Caco-2 (cell line): ENCODE measurements at regions of chr12 and their contacts with region 1.

Region 1: GRCh38 chr12:31406345-31406744 is 80.4 kb upstream of the SINHCAF start:
- DNase-seq: no peak
- H3K4me3 ChIP-seq: no peak overlapping the region
- H3K4me3 Mint-ChIP-seq: no peak overlapping the region
- H3K27ac Mint-ChIP-seq: peak overlapping the region; percentile 3
- H3K4me1 ChIP-seq: no peaks in the 10 kb centered on the region; the same call in 1 of the 2 replicates
- H3K4me1 Mint-ChIP-seq: no peaks in the 10 kb centered on the region
- H3K27me3 ChIP-seq: peaks cover 1% of the 10 kb centered on the region
- H3K27me3 Mint-ChIP-seq: no peaks in the 10 kb centered on the region
- CTCF ChIP-seq: no peak

Region 2: GRCh38 chr12:31245822-31246469 is 160.4 kb before region 1 on chr12:
- CTCF ChIA-PET with region 1: no interaction called
- POLR2A ChIA-PET with region 1: no interaction called
- intact Hi-C with region 1: loop called (anchors 2 kb)
- DNase-seq: peak in 1 of 2 experiments; percentile 46
- H3K4me3 ChIP-seq: no peak overlapping the region
- H3K4me3 Mint-ChIP-seq: no peak overlapping the region
- H3K27ac Mint-ChIP-seq: no peak overlapping the region
- H3K4me1 ChIP-seq: no peaks in the 10 kb centered on the region
- H3K4me1 Mint-ChIP-seq: no peaks in the 10 kb centered on the region
- H3K27me3 ChIP-seq: no peaks in the 10 kb centered on the region
- H3K27me3 Mint-ChIP-seq: peaks cover 3% of the 10 kb centered on the region
- CTCF ChIP-seq: peak; percentile 36 to 39

Region 3: DNA sequence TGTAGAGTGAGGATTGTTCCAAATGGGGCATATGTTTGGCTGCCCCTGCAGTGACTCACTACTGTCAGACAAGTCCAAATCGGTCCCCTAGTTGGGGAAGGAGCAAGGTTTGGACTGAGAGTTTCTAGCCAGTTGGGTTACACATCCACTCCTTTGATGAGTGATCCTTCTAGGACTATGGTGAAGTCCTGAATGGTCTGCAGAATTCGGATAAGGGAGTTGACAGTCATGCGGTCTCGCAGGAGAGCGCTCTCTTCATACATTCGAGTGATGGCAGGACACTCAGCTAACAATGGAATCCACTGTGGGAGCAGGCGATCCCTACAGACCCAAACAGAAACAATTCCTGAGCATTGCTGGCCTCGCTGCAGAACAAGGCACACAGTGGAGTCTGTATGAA is 18.9 kb before region 1 on chr12:
- CTCF ChIA-PET with region 1: interaction called, 18 read pairs
- POLR2A ChIA-PET with region 1: interaction called, 3 read pairs
- intact Hi-C with region 1: no loop called
- DNase-seq: peak in 1 of 2 experiments; percentile 23
- H3K4me3 ChIP-seq: no peak overlapping the region
- H3K4me3 Mint-ChIP-seq: no peak overlapping the region
- H3K27ac Mint-ChIP-seq: peak overlapping the region; percentile 82
- H3K4me1 ChIP-seq: peaks cover 59% of the 10 kb centered on the region
- H3K4me1 Mint-ChIP-seq: peaks cover 50% of the 10 kb centered on the region
- H3K27me3 ChIP-seq: no peaks in the 10 kb centered on the region
- H3K27me3 Mint-ChIP-seq: no peaks in the 10 kb centered on the region
- CTCF ChIP-seq: no peak

Region 4: DNA sequence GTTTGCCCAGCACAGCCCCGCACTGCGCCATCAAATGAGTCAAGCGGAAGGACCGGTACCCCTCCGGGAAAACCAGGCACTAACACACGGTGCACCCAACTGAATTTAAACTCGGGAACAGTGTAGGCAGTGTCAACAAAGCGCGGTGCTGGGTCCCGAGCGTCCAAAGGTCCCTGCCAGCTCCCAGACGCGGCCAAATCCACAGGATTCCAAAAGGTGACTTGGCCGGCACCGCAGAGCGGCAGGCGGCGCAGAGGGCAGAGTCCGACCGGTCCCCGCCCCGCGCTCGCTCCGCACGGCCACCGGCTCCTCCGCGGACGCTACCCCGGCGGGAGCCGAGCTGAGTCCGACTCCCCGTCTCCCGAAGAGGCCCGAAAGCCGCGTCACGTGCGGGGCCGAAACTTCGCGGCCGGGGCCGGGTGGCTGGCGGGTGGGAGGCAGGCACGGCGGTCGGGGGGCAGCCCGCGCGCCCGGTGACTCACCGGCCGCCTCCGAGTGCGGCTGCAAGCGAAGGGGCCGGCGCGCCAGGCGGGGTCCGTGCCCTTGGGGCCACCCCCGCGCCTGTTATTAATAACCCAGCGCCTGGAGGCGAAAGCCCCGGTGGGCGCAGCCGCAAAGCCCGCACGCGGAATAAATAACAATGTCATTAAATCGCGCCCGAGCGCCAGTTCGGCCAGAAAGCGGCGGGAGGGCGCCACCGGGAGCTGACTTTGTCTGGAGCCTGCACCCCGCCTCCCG is 183.7 kb after region 1 on chr12:
- CTCF ChIA-PET with region 1: no interaction called
- POLR2A ChIA-PET with region 1: interaction called, 3 read pairs
- intact Hi-C with region 1: loop called (anchors 1 kb)
- DNase-seq: peak; percentile 90 to 91
- H3K4me3 ChIP-seq: peak overlapping the region; percentile 85
- H3K4me3 Mint-ChIP-seq: peak overlapping the region; percentile 90
- H3K27ac Mint-ChIP-seq: peak overlapping the region; percentile 70
- H3K4me1 ChIP-seq: peaks cover 15% of the 10 kb centered on the region; the same call in 1 of the 2 replicates
- H3K4me1 Mint-ChIP-seq: peaks cover 22% of the 10 kb centered on the region
- H3K27me3 ChIP-seq: no peaks in the 10 kb centered on the region
- H3K27me3 Mint-ChIP-seq: no peaks in the 10 kb centered on the region
- CTCF ChIP-seq: peak in 1 of 2 experiments; percentile 16

Region 5: GRCh38 chr12:31641509-31642090 is 235.3 kb after region 1 on chr12:
- CTCF ChIA-PET with region 1: interaction called, 10 read pairs
- POLR2A ChIA-PET with region 1: no interaction called
- intact Hi-C with region 1: loop called (anchors 1 kb)
- DNase-seq: no peak
- H3K4me3 ChIP-seq: no peak overlapping the region
- H3K4me3 Mint-ChIP-seq: no peak overlapping the region
- H3K27ac Mint-ChIP-seq: no peak overlapping the region
- H3K4me1 ChIP-seq: peaks cover 8% of the 10 kb centered on the region
- H3K4me1 Mint-ChIP-seq: peaks cover 9% of the 10 kb centered on the region
- H3K27me3 ChIP-seq: no peaks in the 10 kb centered on the region
- H3K27me3 Mint-ChIP-seq: no peaks in the 10 kb centered on the region
- CTCF ChIP-seq: no peak